B cell (primary cell): ENCODE measurements at regions of chr1 and their contacts with region 1.

Region 1: DNA sequence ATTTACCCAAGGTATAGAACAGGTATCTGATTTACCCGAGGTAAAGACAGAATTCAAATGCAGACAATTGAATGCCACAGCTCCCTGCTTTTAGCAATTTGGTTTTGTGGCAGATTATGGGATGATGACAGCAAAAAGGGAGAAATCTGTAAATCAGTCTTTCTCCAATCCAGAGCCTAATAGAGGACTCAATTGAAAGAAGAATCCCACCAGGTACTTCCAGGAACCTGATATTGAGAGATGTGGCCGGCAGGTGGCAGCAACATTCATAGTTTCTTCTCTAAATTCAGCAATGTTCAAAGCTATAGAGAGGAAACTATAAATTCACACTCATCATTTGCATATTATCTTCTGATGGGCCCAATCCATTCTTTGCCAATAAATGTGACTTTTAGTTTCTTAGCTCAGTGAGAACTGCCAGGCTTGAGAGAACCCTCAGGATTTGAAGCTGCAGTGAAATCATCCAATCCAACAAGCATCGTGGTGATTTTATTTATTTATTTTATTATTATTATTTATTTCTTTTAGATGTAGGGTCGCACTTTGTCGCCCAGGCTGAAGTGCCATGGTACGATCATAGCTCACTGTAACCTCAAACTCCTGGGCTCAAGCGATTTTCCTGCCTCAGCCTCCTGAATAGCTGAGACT is 9.8 kb upstream of the PHACTR4 start:
- DNase-seq: peak; percentile 78
- ATAC-seq: peak; percentile 73
- H3K4me3 ChIP-seq: no peak overlapping the region
- H3K4me3 Mint-ChIP-seq: no peak overlapping the region
- H3K27ac ChIP-seq: no peak overlapping the region
- H3K27ac Mint-ChIP-seq: no peak overlapping the region
- H3K4me1 ChIP-seq: peaks cover 0 to 4% of the 10 kb centered on the region in 2 donors
- H3K4me1 Mint-ChIP-seq: peaks cover 2% of the 10 kb centered on the region
- H3K27me3 ChIP-seq: no peaks in the 10 kb centered on the region
- H3K27me3 Mint-ChIP-seq: no peaks in the 10 kb centered on the region
- CTCF ChIP-seq: peak; percentile 80

Region 2: DNA sequence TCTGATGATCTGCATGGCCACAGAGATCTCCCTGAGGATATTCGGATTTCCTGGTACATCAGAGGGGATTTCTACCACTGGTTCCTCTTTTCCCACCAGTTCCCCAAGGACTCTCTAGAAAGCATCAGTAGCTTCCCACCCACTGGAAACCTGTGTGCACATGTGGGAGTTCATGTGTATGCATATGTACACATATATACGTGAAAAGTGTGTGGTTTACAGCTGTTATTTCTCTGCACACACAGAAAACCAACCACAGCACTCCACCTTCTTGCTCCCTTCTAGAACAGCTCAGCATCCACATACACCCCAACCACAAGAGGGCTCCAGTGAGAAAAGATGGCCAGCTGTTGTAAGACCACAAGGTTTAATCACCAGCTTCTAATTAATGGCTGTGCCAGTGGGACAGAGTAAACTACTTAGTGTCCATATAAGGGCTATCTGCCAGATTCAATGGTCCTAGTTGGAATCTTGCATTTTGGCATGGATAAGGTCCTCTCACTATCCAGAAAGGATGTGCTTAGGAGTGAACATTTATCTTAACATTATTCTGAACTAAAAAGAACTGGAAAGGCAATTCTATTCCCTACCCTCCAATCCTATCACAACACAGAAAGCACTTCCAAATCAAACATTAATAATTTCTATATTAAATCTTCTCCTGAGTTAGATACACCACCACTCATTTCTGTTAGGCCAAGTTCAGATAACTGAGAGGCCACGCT is 943.2 kb before region 1 on chr1:
- CTCF ChIA-PET with region 1: no interaction called
- POLR2A ChIA-PET with region 1: no interaction called
- intact Hi-C with region 1: no loop called
- DNase-seq: peak; percentile 79
- ATAC-seq: peak; percentile 66
- H3K4me3 ChIP-seq: no peak overlapping the region
- H3K4me3 Mint-ChIP-seq: no peak overlapping the region
- H3K27ac ChIP-seq: peak overlapping the region; percentile 37 to 69
- H3K27ac Mint-ChIP-seq: peak overlapping the region; percentile 69
- H3K4me1 ChIP-seq: peaks cover 38 to 39% of the 10 kb centered on the region in 2 donors
- H3K4me1 Mint-ChIP-seq: peaks cover 41% of the 10 kb centered on the region
- H3K27me3 ChIP-seq: no peaks in the 10 kb centered on the region
- H3K27me3 Mint-ChIP-seq: no peaks in the 10 kb centered on the region
- CTCF ChIP-seq: peak; percentile 78

Region 3: DNA sequence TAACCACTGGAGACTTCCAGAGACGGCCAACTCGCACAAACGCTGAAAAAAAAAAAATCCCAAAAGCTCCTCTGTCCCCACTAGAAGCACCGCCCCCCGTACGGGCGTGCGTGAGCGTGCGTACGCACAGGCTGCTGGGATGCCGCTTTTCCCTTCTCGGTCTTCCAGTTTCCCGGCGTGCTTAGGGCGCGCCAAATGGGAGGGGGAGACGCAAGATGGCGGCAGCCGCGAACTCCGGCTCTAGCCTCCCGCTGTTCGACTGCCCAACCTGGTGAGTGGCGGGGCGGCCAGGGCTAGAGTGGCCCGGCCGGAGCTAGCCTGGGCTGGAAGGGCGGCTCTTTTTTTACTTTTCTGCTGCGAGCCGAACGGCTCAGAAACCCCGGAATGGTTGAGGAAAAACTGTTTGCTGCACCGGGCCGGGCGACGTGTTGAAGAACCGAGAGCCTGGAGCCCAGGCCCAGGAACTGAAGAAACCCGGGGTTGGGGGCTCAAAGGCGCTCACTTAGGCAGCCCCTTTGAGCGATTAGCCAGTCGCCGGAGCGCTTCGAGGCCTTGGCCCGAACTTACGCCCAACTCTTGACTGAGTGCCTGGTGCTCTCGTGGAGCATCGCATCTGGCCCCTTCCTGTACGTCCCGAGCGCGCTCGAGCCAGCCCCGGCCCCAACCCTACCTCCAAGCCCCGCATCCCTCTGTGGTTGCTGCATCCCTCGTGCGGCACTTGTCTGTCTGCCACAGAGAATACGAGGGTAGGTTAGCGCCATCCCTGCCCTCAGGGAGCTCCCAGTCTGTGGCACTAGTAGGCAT is 528.9 kb before region 1 on chr1 and contains the start of gene PPP1R8:
- CTCF ChIA-PET with region 1: no interaction called
- POLR2A ChIA-PET with region 1: no interaction called
- intact Hi-C with region 1: no loop called
- DNase-seq: peak; percentile 92
- ATAC-seq: peak; percentile 99
- H3K4me3 ChIP-seq: peak within 1 kb of the TSS; percentile 74 to 98 (median 90)
- H3K4me3 Mint-ChIP-seq: peak within 1 kb of the TSS; percentile 94
- H3K27ac ChIP-seq: peak within 1 kb of the TSS; percentile 55 to 88
- H3K27ac Mint-ChIP-seq: peak within 1 kb of the TSS; percentile 93
- H3K4me1 ChIP-seq: peaks cover 12 to 17% of the 10 kb centered on the region in 2 donors
- H3K4me1 Mint-ChIP-seq: peaks cover 23% of the 10 kb centered on the region
- H3K27me3 ChIP-seq: no peaks in the 10 kb centered on the region
- H3K27me3 Mint-ChIP-seq: no peaks in the 10 kb centered on the region
- CTCF ChIP-seq: no peak
- total RNA-seq, gene PPP1R8: 45.1 and 45.4 TPM in 2 replicates

Region 4: DNA sequence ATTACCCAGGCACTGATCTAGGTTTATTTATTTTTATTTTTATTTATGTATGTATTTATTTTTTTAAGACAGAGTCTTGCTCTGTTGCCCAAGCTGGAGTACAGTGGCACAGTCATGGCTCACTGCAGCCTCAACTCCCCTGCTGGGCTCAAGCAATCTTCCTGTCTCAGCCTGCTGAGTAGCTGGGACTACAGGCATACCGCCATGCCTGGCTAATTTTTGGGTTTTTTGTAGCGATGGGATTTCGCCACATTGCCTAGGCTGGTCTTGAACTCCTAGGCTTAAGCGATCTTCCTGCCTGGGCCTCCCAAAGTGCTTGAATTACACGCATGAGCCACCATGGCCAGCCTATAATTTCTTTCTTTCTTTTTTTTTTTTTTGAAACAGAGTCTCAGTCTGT is 19.2 kb after region 1 on chr1:
- CTCF ChIA-PET with region 1: interaction called, 10 read pairs
- POLR2A ChIA-PET with region 1: interaction called, 3 read pairs
- intact Hi-C with region 1: no loop called
- DNase-seq: no peak
- ATAC-seq: no peak
- H3K4me3 ChIP-seq: no peak overlapping the region
- H3K4me3 Mint-ChIP-seq: no peak overlapping the region
- H3K27ac ChIP-seq: peak overlapping the region; percentile 11 to 61
- H3K27ac Mint-ChIP-seq: peak overlapping the region; percentile 59
- H3K4me1 ChIP-seq: peaks cover 9 to 12% of the 10 kb centered on the region in 2 donors
- H3K4me1 Mint-ChIP-seq: peaks cover 22% of the 10 kb centered on the region
- H3K27me3 ChIP-seq: no peaks in the 10 kb centered on the region
- H3K27me3 Mint-ChIP-seq: no peaks in the 10 kb centered on the region
- CTCF ChIP-seq: no peak

Region 5: DNA sequence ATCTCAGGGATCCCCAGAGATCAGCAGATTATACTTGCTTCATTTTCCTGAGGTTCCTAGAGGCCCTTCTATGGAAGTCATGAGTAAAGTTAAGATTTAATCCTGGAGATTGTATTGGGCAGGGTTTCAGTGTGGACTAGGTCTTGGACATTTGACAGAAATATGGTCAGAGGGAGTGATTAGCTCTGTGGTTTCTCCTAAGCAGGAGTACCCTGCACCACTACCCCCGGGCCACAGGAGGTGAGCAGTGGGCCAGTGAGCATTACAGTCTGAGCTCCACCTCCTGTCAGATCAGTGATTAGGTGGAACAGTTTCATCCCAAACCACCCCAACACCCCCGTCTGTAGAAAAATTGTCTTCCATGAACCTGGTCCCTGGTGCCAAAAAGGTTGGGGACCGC is 53.0 kb after region 1 on chr1:
- CTCF ChIA-PET with region 1: interaction called, 15 read pairs
- POLR2A ChIA-PET with region 1: no interaction called
- intact Hi-C with region 1: no loop called
- DNase-seq: no peak
- ATAC-seq: no peak
- H3K4me3 ChIP-seq: no peak overlapping the region
- H3K4me3 Mint-ChIP-seq: no peak overlapping the region
- H3K27ac ChIP-seq: no peak overlapping the region
- H3K27ac Mint-ChIP-seq: no peak overlapping the region
- H3K4me1 ChIP-seq: peaks cover 2 to 6% of the 10 kb centered on the region in 2 donors
- H3K4me1 Mint-ChIP-seq: peaks cover 13% of the 10 kb centered on the region
- H3K27me3 ChIP-seq: no peaks in the 10 kb centered on the region
- H3K27me3 Mint-ChIP-seq: no peaks in the 10 kb centered on the region
- CTCF ChIP-seq: no peak

Region 6: GRCh38 chr1:28602536-28603439 is 243.1 kb after region 1 on chr1:
- CTCF ChIA-PET with region 1: interaction called, 49 read pairs
- POLR2A ChIA-PET with region 1: interaction called, 6 read pairs
- intact Hi-C with region 1: no loop called
- DNase-seq: peak; percentile 57
- ATAC-seq: peak; percentile 28
- H3K4me3 ChIP-seq: no peak overlapping the region
- H3K4me3 Mint-ChIP-seq: no peak overlapping the region
- H3K27ac ChIP-seq: no peak overlapping the region
- H3K27ac Mint-ChIP-seq: no peak overlapping the region
- H3K4me1 ChIP-seq: no peaks in the 10 kb centered on the region
- H3K4me1 Mint-ChIP-seq: no peaks in the 10 kb centered on the region
- H3K27me3 ChIP-seq: no peaks in the 10 kb centered on the region
- H3K27me3 Mint-ChIP-seq: no peaks in the 10 kb centered on the region
- CTCF ChIP-seq: peak; percentile 45